ENCODE measurements at regions of chr3 and their contacts with region 1.

Region 1: DNA sequence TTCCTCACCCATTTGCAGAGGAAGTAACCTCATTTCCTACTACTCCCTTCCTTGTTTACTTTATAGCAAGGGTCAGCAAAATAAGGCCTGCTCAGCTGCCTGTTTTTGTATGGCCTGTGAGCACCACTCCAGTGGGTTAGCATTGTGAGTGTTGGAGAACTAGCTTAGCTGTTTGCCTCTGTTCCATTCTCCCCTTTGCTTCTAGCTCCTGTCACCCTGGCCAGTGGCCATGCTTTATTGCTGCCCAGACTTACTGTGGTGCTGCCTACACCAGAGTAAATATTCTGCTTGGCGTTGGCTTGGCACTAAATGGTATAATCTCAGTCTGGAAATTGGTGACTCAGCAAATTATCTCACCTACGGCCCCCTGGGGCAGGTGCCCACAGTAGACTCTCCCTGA is 8.8 kb downstream of the PDCD6IP start:
- DNase-seq: no peak
- ATAC-seq: peak; percentile 25
- H3K4me3 ChIP-seq: no peak overlapping the region
- H3K27ac ChIP-seq: no peak overlapping the region
- H3K4me1 ChIP-seq: peaks cover 50% of the 10 kb centered on the region
- H3K27me3 ChIP-seq: no peaks in the 10 kb centered on the region
- CTCF ChIP-seq: no peak

Region 2: GRCh38 chr3:33704891-33705290 is 102.3 kb before region 1 on chr3:
- CTCF ChIA-PET with region 1: no interaction called
- POLR2A ChIA-PET with region 1: no interaction called
- intact Hi-C with region 1: no loop called
- DNase-seq: peak; percentile 46
- ATAC-seq: peak; percentile 78
- H3K4me3 ChIP-seq: no peak overlapping the region
- H3K27ac ChIP-seq: no peak overlapping the region
- H3K4me1 ChIP-seq: peaks cover 6% of the 10 kb centered on the region; the same call in 1 of the 2 replicates
- H3K27me3 ChIP-seq: no peaks in the 10 kb centered on the region
- CTCF ChIP-seq: no peak

Region 3: DNA sequence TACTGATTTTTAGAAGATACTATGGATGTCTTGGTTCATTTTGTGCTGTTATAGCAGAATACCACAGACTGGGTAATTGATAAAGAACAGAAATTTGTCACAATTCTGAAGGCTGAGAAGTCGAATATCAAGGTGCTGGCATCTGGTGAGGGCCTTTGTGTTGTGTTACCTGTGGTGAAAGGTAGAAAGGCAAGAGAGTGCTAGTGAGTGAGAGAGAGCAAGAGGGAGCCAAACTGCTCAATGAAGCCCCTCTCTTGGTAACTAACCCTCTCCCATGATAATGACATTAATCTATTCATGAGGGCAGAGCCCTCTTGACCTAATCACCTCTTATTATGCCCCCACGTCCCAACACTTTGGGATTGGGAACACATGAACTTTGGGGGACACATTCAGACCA is 22.5 kb after region 1 on chr3:
- CTCF ChIA-PET with region 1: no interaction called
- POLR2A ChIA-PET with region 1: no interaction called
- intact Hi-C with region 1: loop called (anchors 2 kb)
- DNase-seq: no peak
- ATAC-seq: no peak
- H3K4me3 ChIP-seq: no peak overlapping the region
- H3K27ac ChIP-seq: no peak overlapping the region
- H3K4me1 ChIP-seq: peaks cover 4% of the 10 kb centered on the region; the same call in 1 of the 2 replicates
- H3K27me3 ChIP-seq: no peaks in the 10 kb centered on the region
- CTCF ChIP-seq: no peak

Region 4: DNA sequence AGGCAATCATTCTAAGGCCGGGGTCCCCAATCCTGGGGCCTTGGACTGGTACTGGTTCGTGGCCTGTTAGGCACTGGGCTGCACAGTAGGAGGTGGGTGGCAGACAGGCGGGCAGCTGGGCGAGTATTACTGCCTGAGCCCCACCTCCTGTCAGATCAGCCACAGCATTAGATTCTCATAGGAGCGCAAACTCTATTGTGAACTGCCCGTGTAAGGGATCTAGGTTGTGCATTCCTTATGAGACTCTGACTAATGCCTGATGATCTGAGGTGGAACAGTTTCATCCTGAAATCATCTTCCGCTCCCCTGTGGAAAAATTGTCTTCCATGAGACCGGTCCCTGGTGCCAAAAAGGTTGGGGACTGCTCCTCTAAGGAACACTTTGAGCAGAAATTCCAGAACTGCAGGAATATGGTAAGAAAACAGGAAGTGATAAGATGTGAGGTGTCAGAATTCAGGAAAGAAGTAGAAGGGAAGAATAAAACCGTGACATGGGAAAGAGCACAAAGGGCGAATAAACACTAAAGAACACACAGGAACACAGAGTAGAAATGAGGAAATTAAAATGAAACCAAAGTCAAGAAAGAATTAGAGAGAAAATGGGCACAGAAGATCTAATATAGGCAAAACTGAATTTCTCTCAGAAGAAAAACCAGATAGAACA is 48.8 kb after region 1 on chr3:
- CTCF ChIA-PET with region 1: no interaction called
- POLR2A ChIA-PET with region 1: no interaction called
- intact Hi-C with region 1: loop called (anchors 5 kb)
- DNase-seq: peak; percentile 50
- ATAC-seq: peak; percentile 74
- H3K4me3 ChIP-seq: no peak overlapping the region
- H3K27ac ChIP-seq: peak overlapping the region; percentile 78
- H3K4me1 ChIP-seq: peaks cover 26% of the 10 kb centered on the region
- H3K27me3 ChIP-seq: no peaks in the 10 kb centered on the region
- CTCF ChIP-seq: no peak

Measured in PC-3 (cell line).